ENCODE measurements at regions of chr7 and their contacts with region 1.

Region 1: GRCh38 chr7:101287032-101287431 is 34.6 kb downstream of the IFT22 start:
- DNase-seq: no peak
- ATAC-seq: no peak
- H3K4me3 Mint-ChIP-seq: no peak overlapping the region
- H3K27ac Mint-ChIP-seq: no peak overlapping the region
- H3K4me1 Mint-ChIP-seq: peaks cover 24% of the 10 kb centered on the region
- H3K27me3 Mint-ChIP-seq: peaks cover 7% of the 10 kb centered on the region

Region 2: GRCh38 chr7:100933735-100934134 is 353.3 kb before region 1 on chr7:
- CTCF ChIA-PET with region 1: no interaction called
- POLR2A ChIA-PET with region 1: no interaction called
- DNase-seq: no peak
- ATAC-seq: no peak
- H3K4me3 Mint-ChIP-seq: no peak overlapping the region
- H3K27ac Mint-ChIP-seq: no peak overlapping the region
- H3K4me1 Mint-ChIP-seq: no peaks in the 10 kb centered on the region
- H3K27me3 Mint-ChIP-seq: peaks cover 6% of the 10 kb centered on the region

Region 3: DNA sequence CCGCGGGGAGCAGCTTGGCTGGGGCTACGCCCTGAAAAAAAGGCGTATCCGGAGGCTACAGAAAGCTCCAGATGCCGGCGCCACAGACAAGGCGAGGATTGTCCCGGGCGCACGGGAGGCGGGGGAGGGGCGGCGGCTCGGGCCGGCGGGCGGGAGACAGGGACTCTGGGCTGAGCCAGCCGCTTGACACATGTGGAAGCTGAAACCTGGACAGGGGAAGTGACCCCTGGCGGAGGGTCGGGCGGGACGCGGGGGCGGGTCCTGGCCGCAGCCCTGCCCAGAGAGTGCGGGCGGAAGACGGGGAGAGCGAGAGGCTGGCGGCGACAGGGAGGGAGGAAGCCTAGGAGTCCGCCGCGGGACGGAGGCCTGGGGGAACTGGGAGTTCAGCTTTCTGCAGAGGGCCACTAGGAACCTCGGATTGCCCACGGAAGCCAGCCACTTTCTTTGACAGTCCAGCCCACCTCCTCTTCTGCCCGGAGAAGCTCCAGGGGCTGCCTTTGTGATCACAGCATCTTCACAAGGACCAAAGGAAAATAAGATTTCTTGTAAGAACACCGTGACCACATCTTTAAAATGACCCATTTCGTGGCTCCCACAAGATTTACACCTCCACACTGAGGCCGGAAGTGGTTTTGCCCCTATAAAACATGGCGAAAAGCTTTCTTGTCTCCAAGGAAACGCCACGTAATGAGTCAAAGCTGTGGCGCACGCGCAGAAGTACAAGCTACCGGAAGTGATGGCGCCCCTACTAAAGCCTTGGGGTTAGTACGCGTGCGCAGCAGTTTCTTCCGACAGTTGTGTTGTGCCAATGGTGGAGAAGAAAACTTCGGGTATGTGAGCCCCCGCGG is 69.4 kb before region 1 on chr7 and contains the starts of genes PLOD3 and ZNHIT1:
- CTCF ChIA-PET with region 1: interaction called, 18 read pairs
- POLR2A ChIA-PET with region 1: no interaction called
- DNase-seq: peak; percentile 99
- ATAC-seq: peak; percentile 71
- H3K4me3 Mint-ChIP-seq: peak within 1 kb of the TSS; percentile 96
- H3K27ac Mint-ChIP-seq: peak within 1 kb of the TSS; percentile 88
- H3K4me1 Mint-ChIP-seq: peaks cover 36% of the 10 kb centered on the region
- H3K27me3 Mint-ChIP-seq: no peaks in the 10 kb centered on the region
- total RNA-seq, gene PLOD3: 51.1 to 58.1 TPM
- total RNA-seq, gene ZNHIT1: 56.1 to 58.4 TPM

Region 4: GRCh38 chr7:101244375-101245146 is 42.5 kb before region 1 on chr7 and contains the start of gene FIS1:
- CTCF ChIA-PET with region 1: interaction called, 10 read pairs
- POLR2A ChIA-PET with region 1: no interaction called
- DNase-seq: peak; percentile 95
- ATAC-seq: peak; percentile 96
- H3K4me3 Mint-ChIP-seq: peak within 1 kb of the TSS; percentile 93
- H3K27ac Mint-ChIP-seq: peak within 1 kb of the TSS; percentile 97
- H3K4me1 Mint-ChIP-seq: peaks cover 33% of the 10 kb centered on the region
- H3K27me3 Mint-ChIP-seq: no peaks in the 10 kb centered on the region
- total RNA-seq, gene FIS1: 103 to 108 TPM

Region 5: GRCh38 chr7:101273206-101273605 is 13.8 kb before region 1 on chr7:
- CTCF ChIA-PET with region 1: interaction called, 48 read pairs
- POLR2A ChIA-PET with region 1: no interaction called
- DNase-seq: no peak
- ATAC-seq: no peak
- H3K4me3 Mint-ChIP-seq: no peak overlapping the region
- H3K27ac Mint-ChIP-seq: no peak overlapping the region
- H3K4me1 Mint-ChIP-seq: no peaks in the 10 kb centered on the region
- H3K27me3 Mint-ChIP-seq: peaks cover 3% of the 10 kb centered on the region

Region 6: GRCh38 chr7:101315336-101315735 is 28.3 kb after region 1 on chr7:
- CTCF ChIA-PET with region 1: interaction called, 18 read pairs
- POLR2A ChIA-PET with region 1: no interaction called
- DNase-seq: peak; percentile 73
- ATAC-seq: no peak
- H3K4me3 Mint-ChIP-seq: no peak overlapping the region
- H3K27ac Mint-ChIP-seq: no peak overlapping the region
- H3K4me1 Mint-ChIP-seq: no peaks in the 10 kb centered on the region
- H3K27me3 Mint-ChIP-seq: no peaks in the 10 kb centered on the region

Measured in activated CD8-positive, alpha-beta T cell treated with anti-CD3 and anti-CD28 coated beads, Interleukin-2, amount 10 ng/mL, durations not matched to agents 7 days and 5 days (primary cell).